ENCODE measurements at regions of chr19 and their contacts with region 1.

Region 1: GRCh38 chr19:44107751-44108150 is 5.4 kb upstream of the ZNF225 start:
- DNase-seq: no peak
- H3K4me3 ChIP-seq: no peak overlapping the region
- H3K27ac ChIP-seq: no peak overlapping the region
- H3K4me1 ChIP-seq: peaks cover 0 to 10% (median 3%) of the 10 kb centered on the region in 4 donors
- H3K27me3 ChIP-seq: no peaks in the 10 kb centered on the region
- CTCF ChIP-seq: no peak
- EP300 ChIP-seq: no peak
- POLR2A ChIP-seq: no peak

Region 2: DNA sequence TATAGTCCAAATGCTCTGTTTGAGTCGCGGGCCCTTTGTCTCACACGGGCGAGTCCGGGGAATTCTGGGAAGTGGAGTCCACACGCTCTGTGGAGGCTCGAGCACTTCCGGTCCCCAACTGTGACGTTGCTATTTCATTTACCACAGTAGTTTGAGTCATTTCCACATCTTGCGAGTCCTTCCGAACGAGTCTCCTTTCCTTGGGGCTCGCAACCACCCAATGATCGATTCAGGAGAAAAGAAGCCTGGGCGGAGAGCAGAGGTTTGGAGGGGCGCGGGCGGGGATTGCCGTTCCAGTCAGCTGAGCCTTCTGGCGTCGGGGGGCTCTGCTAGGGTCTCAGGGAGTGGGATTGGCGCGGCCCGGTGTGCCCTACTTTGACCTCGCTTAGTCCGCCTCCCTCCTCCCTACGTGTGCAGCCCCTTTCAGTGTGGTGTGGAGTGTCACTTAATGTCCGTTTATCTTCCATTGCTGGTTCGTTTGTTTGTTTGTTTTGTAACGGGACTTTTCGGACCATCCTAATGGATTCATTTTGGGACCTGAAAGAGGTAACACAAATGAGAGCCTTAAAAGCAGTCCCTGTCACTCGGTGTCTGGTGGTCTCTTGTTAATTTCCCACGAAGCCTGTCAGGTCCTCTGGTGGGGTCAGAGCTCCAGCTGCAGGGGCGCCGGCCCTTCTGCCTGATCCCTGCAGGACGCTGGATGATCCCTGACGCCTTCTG is 82.4 kb before region 1 on chr19 and contains the start of gene ZNF222:
- in situ Hi-C with region 1: no loop called
- intact Hi-C with region 1: no loop called
- DNase-seq: peak; percentile 87
- H3K4me3 ChIP-seq: peak within 1 kb of the TSS; percentile 37 to 88 (median 74)
- H3K27ac ChIP-seq: peak within 1 kb of the TSS; percentile 12 to 70 (median 44)
- H3K4me1 ChIP-seq: peaks cover 0 to 11% (median 5%) of the 10 kb centered on the region in 4 donors
- H3K27me3 ChIP-seq: peaks cover 4% of the 10 kb centered on the region
- CTCF ChIP-seq: no peak
- EP300 ChIP-seq: no peak
- POLR2A ChIP-seq: no peak
- total RNA-seq, gene ZNF222: 2.2 to 6.3 (median 3.0) TPM in 3 of 4 donors, not detected in the other

Region 3: DNA sequence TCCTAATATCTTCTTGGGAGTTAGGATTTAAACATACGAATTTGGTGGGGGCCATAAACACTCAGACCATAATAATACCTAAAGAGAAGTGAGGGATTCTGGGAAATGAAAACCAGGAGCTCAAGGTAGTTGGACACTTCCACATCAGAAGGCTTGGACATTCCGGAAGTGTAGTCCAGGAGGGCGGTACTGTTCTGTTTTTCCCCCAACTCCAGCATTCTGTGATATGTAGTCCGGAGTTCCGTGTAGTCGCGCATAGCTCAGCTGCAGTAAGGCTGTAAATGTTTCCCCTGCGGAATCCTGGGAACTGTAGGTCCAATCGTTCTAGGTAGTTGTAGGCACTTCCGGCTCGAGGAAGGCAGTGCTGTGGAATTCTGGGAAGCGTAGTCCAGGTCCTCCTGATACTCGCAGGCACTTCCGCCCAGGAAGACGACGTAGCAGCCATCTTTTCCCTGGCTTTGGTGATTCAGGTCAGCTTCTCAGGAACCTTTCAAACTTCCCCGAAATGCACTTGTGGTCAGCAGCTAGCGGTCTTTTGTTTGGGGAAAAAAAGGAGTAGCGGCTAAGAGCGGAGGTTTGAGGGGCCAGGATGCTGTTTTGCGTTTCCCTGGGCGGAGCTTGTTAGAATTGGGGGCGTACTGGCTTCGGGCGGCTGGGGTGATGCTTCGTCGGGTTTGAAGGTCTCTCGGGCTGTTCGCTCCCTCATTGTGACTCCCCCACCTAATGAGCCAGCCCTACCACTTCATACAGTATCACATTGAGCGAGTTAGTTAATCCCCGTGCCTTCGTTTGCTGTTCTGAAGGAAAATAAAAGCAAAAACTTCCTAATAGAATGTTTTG is 57.1 kb after region 1 on chr19 and contains the start of gene ZNF226:
- in situ Hi-C with region 1: no loop called
- intact Hi-C with region 1: loop called (anchors 10 kb)
- DNase-seq: peak; percentile 91
- H3K4me3 ChIP-seq: peak within 1 kb of the TSS; percentile 60 to 84 (median 78)
- H3K27ac ChIP-seq: peak within 1 kb of the TSS; percentile 77 to 86 (median 85)
- H3K4me1 ChIP-seq: peaks cover 5 to 14% (median 8%) of the 10 kb centered on the region in 4 donors
- H3K27me3 ChIP-seq: no peaks in the 10 kb centered on the region
- CTCF ChIP-seq: no peak
- EP300 ChIP-seq: no peak
- POLR2A ChIP-seq: peak; percentile 26
- total RNA-seq, gene ZNF226: 4.1 to 27.1 (median 23.9) TPM

Region 4: GRCh38 chr19:44232867-44233266 is 125.1 kb after region 1 on chr19:
- in situ Hi-C with region 1: no loop called
- intact Hi-C with region 1: no loop called
- DNase-seq: no peak
- H3K4me3 ChIP-seq: no peak overlapping the region
- H3K27ac ChIP-seq: no peak overlapping the region
- H3K4me1 ChIP-seq: no peaks in the 10 kb centered on the region
- H3K27me3 ChIP-seq: no peaks in the 10 kb centered on the region
- CTCF ChIP-seq: no peak
- EP300 ChIP-seq: no peak
- POLR2A ChIP-seq: no peak

Measured in transverse colon (tissue), 4 donors.